H1 (cell line): ENCODE measurements at regions of chr17 and their contacts with region 1.

Region 1: DNA sequence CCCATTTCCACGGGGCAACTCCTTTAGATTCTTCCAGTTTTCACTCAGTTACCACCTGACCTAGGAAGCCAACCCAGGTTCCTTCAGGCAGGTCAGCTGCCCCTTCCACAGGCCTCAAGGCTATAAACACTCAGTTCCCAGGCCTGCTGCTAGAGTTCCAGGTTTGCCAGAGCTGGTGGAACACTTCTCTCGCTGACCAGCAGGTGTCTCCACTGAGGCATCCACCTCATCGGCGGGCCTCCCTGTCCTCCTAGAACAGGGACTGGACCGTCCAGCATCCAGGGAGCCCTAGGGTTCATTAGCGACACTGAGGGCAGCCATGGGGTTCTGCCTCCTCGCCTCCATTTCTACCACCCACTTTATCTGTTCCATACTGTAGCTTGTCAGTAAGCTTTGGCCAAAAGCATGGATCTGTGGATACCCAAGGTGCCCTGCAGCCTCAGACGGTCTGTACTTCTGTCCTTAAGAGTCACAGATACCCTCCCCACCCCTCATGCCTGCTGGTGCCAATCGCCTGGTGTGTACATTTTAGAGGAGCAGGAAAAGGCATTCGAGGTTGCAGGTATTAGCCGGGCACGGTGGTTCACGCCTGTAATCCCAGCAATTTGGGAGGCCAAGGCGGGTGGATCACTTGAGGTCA is 29.0 kb downstream of the PIMREG start:
- DNase-seq: peak in 1 of 2 experiments; percentile 93
- H3K4me3 ChIP-seq: no peak overlapping the region
- H3K27ac ChIP-seq: no peak overlapping the region
- H3K4me1 ChIP-seq: peaks cover 0 to 13% (median 8%) of the 10 kb centered on the region in 4 experiments; a peak in 4 of 7 replicates
- H3K27me3 ChIP-seq: no peaks in the 10 kb centered on the region
- CTCF ChIP-seq: peak; percentile 85 to 99 (median 98)
- EP300 ChIP-seq: no peak; a peak in 1 of 3 replicates
- POLR2A ChIP-seq: no peak
- RAD21 ChIP-seq: peak; percentile 85 to 92

Region 2: GRCh38 chr17:6487251-6488007 is 14.2 kb after region 1 on chr17:
- CTCF ChIA-PET with region 1: interaction called, 28 read pairs
- POLR2A ChIA-PET with region 1: interaction called, 5 read pairs
- DNase-seq: no peak
- H3K4me3 ChIP-seq: no peak overlapping the region
- H3K27ac ChIP-seq: no peak overlapping the region
- H3K4me1 ChIP-seq: peaks cover 3 to 22% (median 12%) of the 10 kb centered on the region in 4 experiments
- H3K27me3 ChIP-seq: no peaks in the 10 kb centered on the region
- CTCF ChIP-seq: no peak
- EP300 ChIP-seq: no peak
- POLR2A ChIP-seq: no peak
- RAD21 ChIP-seq: no peak

Region 3: DNA sequence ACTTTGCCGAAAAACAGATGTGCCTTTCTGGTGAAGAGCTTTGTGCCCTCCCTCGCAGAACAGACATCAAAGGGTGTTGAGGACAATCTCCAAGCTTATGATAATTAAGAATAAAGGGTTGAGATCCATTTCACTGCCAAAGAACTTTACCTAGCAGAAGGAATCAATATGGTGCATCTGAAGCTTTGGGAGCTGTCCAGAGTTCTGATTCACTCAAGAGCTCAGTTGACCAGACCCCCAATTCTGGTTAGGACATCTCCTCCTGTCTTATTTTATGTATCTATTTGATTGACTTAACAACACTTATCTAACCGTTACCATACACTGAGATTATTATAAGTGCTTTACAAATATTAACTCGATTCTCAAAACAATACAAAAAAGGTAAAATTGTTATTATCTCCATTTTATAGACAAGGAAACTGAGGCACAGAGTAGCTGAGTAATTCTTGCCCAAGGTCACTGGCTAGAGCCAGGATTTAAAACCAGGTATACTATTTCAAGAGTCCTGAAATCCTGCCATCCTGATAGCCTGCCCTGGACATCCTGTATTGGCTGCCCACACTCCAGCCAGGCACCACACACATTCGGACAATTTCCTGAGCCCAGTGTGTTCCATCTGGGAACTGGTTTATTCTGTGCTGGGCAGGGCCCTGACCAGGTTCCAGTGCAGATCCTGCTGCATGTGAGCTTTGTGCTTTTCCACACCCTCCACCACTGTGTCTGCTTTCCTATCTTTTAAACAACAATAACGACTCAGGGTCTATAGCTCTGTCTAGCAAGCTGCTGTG is 53.3 kb after region 1 on chr17:
- CTCF ChIA-PET with region 1: interaction called, 36 read pairs
- POLR2A ChIA-PET with region 1: no interaction called
- DNase-seq: no peak
- H3K4me3 ChIP-seq: no peak overlapping the region
- H3K27ac ChIP-seq: no peak overlapping the region
- H3K4me1 ChIP-seq: peaks cover 0 to 10% (median 4%) of the 10 kb centered on the region in 4 experiments; a peak in 6 of 7 replicates
- H3K27me3 ChIP-seq: no peaks in the 10 kb centered on the region
- CTCF ChIP-seq: no peak
- EP300 ChIP-seq: no peak
- POLR2A ChIP-seq: no peak
- RAD21 ChIP-seq: no peak

Region 4: GRCh38 chr17:6551909-6552768 is 78.9 kb after region 1 on chr17:
- CTCF ChIA-PET with region 1: interaction called, 10 read pairs
- POLR2A ChIA-PET with region 1: no interaction called
- DNase-seq: no peak
- H3K4me3 ChIP-seq: no peak overlapping the region
- H3K27ac ChIP-seq: no peak overlapping the region
- H3K4me1 ChIP-seq: peaks cover 4 to 22% (median 12%) of the 10 kb centered on the region in 4 experiments
- H3K27me3 ChIP-seq: peaks cover 8 to 26% (median 22%) of the 10 kb centered on the region in 4 experiments; a peak in 6 of 7 replicates
- CTCF ChIP-seq: no peak
- EP300 ChIP-seq: no peak
- POLR2A ChIP-seq: no peak
- RAD21 ChIP-seq: no peak